Heart right ventricle (tissue), 16 donors: ENCODE measurements at regions of chr14 and their contacts with region 1.

Region 1: DNA sequence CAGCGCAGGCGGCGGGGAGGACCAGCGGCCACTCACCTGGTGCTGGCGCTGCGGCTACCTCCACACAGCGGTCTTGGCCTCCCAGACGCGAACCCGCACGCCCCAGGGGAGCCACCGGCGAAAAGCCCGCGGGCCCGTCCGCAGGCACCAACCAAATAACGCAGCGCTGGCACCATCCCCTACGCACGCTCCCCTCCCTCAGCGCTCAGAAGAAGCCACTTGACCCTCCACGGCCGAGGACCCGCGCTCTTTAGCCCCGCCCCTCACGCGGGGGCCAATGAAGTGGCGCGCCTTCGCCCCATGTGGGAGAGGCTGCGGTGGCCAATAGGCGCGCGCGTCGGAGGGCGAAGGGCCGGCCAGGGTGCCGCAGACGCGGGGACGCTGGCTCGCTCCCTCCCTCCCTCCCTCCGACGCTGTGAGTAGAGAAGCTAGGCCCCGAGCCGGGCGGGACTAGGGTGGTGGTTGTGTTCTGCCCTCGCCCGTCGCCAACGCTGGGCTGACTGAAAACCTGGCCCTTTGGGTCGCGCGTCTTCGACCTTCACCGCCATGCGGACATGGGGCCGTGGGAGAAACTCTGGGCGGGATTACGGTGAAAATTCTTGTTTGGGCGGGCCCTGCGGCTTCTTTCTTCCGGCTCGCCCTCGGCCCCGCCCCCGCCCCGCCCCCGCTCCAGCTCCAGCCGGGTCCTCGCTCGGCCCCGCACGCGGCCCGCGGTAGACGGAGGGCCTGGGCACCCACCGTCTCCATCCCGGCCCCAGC is at the starts of genes DMAC2L and L2HGDH:
- DNase-seq: peak; percentile 92 to 94
- ATAC-seq: peak; percentile 99 to 100 (median 99)
- H3K4me3 ChIP-seq: peak within 1 kb of the TSS; percentile 43 to 96 (median 76)
- H3K27ac ChIP-seq: peak within 1 kb of the TSS; percentile 80 to 96 (median 93)
- H3K4me1 ChIP-seq: peaks cover 0 to 24% (median 17%) of the 10 kb centered on the region in 9 donors
- H3K27me3 ChIP-seq: no peaks in the 10 kb centered on the region
- CTCF ChIP-seq: peak in 3 of 9 donors; percentile 4 to 56 (median 54)
- total RNA-seq, gene DMAC2L: 17.0 to 31.3 (median 24.4) TPM
- total RNA-seq, gene L2HGDH: 7.5 to 15.5 (median 12.1) TPM

Region 2: DNA sequence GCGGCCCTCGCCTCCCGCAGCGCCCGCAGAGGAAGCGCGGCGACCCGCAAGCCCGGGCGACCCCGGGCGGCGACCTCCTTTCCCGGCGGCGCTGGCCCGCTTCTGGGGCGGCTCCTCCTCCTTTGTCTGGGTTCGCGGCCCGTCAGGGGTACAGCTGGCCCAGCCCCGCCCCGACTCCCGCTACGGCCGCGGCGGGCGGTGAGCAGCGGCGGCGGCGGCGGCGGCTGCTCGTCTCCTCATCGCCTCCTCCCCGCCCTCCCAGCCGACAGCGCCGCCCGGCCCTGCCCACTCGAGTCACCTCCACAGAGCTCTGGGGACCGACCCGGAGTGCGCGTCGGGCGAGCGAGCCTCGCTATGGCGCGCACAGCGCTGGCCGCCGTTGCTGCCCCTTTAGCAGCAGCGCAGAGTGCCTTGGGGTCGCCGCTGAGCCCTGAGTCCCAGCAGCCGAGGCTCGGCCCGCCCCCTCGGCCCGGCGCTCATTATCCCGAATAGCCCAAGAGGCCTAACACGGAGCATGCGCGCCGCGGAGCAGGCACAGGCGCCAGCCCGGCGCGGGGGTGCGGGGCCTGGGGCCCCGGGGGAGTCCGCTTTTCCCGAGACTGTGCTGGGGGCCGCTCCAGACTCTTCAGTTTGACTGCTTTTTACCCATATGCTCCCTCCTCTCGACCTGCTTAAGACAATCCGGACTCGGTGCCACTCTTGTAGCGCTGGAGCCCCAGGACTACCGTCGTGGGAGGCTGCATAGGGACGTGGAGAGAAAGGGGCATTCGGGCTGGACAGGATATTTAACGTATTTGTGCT is 80.5 kb before region 1 on chr14 and contains the start of gene SOS2:
- intact Hi-C with region 1: loop called in 1 of 10 experiments (anchors 5 kb)
- DNase-seq: peak; percentile 86 to 88
- ATAC-seq: peak; percentile 94 to 97 (median 95)
- H3K4me3 ChIP-seq: peak within 1 kb of the TSS; percentile 66 to 89 (median 83)
- H3K27ac ChIP-seq: peak within 1 kb of the TSS; percentile 93 to 99 (median 97)
- H3K4me1 ChIP-seq: peaks cover 5 to 53% (median 40%) of the 10 kb centered on the region in 9 donors
- H3K27me3 ChIP-seq: no peaks in the 10 kb centered on the region
- CTCF ChIP-seq: peak in 4 of 9 donors; percentile 5 to 33 (median 28)
- total RNA-seq, gene SOS2: 27.4 to 40.0 (median 34.4) TPM

Region 3: DNA sequence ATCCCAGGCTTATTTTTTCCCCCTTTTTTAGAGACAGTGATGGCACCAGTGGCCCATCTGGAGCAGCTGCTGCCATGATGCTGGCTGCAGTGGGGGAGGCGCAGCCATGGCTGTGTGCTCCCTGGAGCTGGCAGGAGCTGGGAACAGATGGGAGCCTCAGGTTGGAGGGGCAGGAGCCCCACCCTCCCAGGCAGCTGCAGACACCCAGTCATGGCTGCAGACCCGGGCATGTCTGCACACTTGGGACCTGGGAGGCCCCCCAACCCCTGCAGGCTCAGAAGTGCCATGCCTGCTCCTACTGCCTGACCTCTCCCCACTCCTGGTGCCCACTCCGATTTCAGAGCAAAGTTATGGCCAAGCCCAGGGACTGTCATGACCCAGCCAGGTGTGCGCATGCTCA is 59.4 kb after region 1 on chr14:
- intact Hi-C with region 1: no loop called
- DNase-seq: no peak
- ATAC-seq: peak in 1 of 8 donors; percentile 12
- H3K4me3 ChIP-seq: no peak overlapping the region
- H3K27ac ChIP-seq: no peak overlapping the region
- H3K4me1 ChIP-seq: peaks cover 0 to 6% (median 0%) of the 10 kb centered on the region in 9 donors
- H3K27me3 ChIP-seq: no peaks in the 10 kb centered on the region
- CTCF ChIP-seq: no peak

Region 4: GRCh38 chr14:50383618-50384225 is 71.6 kb after region 1 on chr14:
- intact Hi-C with region 1: no loop called
- DNase-seq: no peak
- ATAC-seq: peak in 1 of 8 donors; percentile 44
- H3K4me3 ChIP-seq: no peak overlapping the region
- H3K27ac ChIP-seq: no peak overlapping the region
- H3K4me1 ChIP-seq: no peaks in the 10 kb centered on the region
- H3K27me3 ChIP-seq: no peaks in the 10 kb centered on the region
- CTCF ChIP-seq: no peak